Cardiac septum (tissue), 1 donor: ENCODE measurements at regions of chr16 and their contacts with region 1.

Region 1: DNA sequence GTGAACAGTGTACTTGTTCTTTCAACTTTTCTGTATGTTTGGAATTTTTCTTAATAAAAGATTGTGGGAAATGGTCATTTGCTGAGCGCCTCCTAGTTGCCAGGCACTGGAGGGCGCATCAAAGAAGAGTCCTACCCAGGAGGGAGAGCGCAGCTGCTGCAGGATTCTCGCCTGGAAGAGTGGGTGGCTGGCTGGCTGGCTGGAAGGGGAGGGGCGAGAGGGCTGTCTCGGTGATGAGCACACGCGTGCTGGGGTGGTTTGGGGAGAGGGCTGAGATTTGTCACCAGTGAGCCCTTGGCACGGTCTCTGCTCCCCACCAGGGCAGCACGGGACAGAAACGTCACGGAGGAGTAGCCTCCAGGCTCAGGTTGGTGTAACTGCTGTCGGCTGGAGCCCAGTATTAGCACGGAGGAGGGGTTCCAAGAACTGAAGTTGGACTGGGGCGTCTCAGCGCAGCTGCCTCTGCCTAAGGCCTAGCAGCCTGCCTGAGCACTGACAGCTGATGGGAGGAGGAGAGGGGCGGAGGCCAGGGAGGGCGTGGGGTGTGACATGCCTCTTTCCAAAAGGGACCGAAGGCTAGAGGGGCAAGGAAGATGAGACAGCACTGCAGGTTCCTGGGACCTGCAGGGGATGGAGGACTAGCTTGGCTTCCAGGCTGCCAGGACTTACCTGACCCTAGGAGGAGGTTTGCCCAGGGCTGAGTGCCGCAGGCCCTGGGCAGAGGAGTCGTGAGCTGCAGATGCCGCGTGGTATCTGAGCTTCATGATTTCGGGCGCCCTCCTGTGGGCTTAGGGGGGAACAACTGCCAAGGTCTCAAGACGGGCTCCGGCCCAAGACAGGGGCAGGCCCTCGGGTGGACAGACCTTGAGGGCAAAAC is 5.7 kb downstream of the LDHD start:
- DNase-seq: peak; percentile 94

Region 2: GRCh38 chr16:74718741-74719610 is 391.9 kb before region 1 on chr16:
- intact Hi-C with region 1: loop called (anchors 10 kb)
- DNase-seq: no peak

Region 3: GRCh38 chr16:74813109-74813641 is 297.7 kb before region 1 on chr16:
- intact Hi-C with region 1: loop called (anchors 5 kb)
- DNase-seq: peak; percentile 85

Region 4: DNA sequence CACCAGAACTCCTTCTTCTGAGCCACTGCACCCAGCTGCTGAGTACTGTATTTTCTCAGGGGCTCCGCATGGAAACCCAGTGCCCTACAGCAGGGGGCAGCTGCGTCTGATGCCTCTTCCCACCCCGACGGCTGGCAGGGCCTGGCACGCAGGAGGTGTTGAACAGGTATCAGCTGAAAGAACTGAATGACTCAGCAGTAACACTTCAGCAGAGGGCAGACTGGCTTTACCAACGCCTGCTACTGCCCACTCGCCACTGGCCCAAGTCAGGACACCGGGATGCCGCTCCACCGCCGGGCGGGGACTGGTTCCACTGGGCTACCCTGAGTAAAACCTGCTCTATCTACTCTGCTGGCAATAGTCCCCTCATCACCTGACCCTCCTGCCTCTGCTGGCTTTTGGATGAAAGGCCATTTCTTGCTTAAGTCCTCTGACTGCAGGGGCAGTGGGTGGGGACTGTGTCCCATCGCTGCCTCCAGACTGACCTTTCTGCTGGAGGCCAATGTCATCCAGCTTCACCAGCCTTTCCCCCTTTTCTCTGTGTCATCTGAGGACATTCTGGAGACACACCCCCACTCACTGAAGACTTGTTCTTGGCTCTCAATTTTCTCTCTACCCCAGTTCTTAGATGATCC is 235.8 kb before region 1 on chr16:
- intact Hi-C with region 1: loop called (anchors 5 kb)
- DNase-seq: no peak

Region 5: DNA sequence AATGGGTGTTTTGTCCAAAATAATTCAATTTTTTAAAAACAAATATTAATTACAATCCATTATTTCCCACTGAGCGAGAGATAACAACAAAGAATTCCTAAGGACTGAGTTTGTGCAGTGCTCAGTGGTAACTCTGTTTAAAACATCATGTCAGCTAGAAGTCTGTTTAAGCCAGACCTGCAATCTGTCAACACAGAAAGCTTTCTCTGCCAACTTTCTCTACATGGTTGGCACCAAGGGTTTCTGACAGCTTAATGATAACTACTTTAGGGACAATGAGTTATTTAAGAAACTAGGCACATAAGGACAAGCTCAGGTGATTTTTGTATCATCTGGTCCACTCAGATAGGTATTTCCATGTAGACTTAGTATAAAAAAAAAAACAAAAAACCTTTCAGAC is 207.8 kb before region 1 on chr16:
- intact Hi-C with region 1: loop called (anchors 2 kb)
- DNase-seq: no peak

Region 6: GRCh38 chr16:74998481-74999218 is 112.2 kb before region 1 on chr16 and contains the start of gene ZNRF1:
- intact Hi-C with region 1: loop called (anchors 1 kb)
- DNase-seq: peak; percentile 90
- total RNA-seq, gene ZNRF1: 31.3 TPM

Region 7: DNA sequence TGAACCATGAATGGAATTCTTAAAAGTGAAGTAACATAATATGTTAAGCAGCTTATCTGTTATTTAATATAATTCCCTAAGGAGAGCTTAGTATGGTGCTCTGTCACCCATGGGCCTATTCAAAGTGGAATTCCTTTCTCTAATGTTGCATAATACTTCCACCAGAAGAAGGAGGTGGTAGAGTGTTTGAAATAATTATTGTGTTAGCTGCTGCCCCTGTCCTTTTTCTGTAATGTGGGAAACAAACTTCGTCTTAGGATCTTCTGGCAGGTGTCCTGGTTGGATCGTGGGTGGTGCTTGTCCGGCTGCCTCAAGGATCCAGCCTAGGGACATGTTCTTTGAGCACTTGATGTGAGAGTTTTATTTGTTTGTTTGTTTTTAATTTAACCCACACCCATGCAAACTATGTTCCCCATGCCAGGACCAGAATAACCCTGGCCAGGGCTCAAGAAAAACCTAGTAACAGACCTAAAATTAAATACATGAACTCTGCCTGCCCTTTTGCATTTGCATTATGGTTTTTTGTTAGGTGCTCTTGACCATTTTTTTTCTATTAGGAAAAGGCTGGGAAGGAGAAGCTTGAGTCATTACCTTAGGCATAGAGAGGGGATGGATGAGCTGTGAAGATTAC is 66.0 kb before region 1 on chr16:
- intact Hi-C with region 1: loop called (anchors 2 kb)
- DNase-seq: peak; percentile 78